Natural killer cell (primary cell): ENCODE measurements at regions of chr2 and their contacts with region 1.

Region 1: DNA sequence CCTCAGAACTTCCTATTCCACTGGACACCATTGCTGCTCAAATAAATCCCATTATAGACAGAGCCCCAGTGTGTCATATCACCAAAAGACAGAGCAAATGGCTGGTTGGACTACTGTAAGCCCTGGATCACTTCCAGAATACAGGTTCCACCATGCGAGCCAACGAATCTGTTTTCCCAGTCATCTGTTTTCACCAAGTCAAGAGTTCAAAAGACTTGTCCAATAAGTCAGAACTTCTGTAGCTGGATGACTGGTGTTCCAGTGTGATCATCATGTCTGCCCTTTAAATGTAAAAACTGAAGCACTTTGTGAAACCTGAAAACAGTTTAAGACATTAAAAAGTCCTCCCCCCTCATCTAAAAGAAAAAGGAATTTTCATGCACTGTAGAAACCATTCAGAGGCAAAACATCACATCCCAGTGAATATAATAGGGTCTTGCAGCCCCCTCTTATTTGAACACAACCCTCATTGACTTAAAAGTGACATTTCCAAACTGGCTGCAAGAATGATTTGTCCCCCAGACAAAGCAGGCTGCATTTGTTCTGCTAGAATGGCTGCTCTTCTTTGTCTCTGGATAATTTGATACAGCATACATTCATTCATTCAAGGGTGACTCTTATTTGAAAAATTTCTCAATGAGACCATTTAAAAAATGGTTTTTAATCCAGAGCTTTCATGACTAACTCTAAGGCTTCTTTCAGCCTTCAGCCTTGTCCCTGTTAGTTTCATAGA is 64.6 kb upstream of the TANC1 start:
- DNase-seq: no peak
- ATAC-seq: no peak
- H3K4me3 ChIP-seq: no peak overlapping the region
- H3K4me3 Mint-ChIP-seq: no peak overlapping the region
- H3K27ac ChIP-seq: no peak overlapping the region
- H3K27ac Mint-ChIP-seq: no peak overlapping the region
- H3K4me1 ChIP-seq: no peaks in the 10 kb centered on the region
- H3K4me1 Mint-ChIP-seq: no peaks in the 10 kb centered on the region
- H3K27me3 ChIP-seq: no peaks in the 10 kb centered on the region
- H3K27me3 Mint-ChIP-seq: peaks cover 0 to 16% of the 10 kb centered on the region in 2 donors
- CTCF ChIP-seq: no peak

Region 2: GRCh38 chr2:158191076-158191895 is 712.6 kb before region 1 on chr2:
- intact Hi-C with region 1: no loop called
- DNase-seq: peak in 1 of 2 donors; percentile 61
- ATAC-seq: peak in 1 of 3 donors; percentile 30
- H3K4me3 ChIP-seq: peak overlapping the region; percentile 2
- H3K4me3 Mint-ChIP-seq: peak overlapping the region; percentile 38
- H3K27ac ChIP-seq: no peak overlapping the region
- H3K27ac Mint-ChIP-seq: no peak overlapping the region
- H3K4me1 ChIP-seq: no peaks in the 10 kb centered on the region
- H3K4me1 Mint-ChIP-seq: peaks cover 5 to 6% of the 10 kb centered on the region in 2 donors
- H3K27me3 ChIP-seq: no peaks in the 10 kb centered on the region
- H3K27me3 Mint-ChIP-seq: no peaks in the 10 kb centered on the region
- CTCF ChIP-seq: no peak

Region 3: GRCh38 chr2:158828493-158829164 is 75.2 kb before region 1 on chr2:
- intact Hi-C with region 1: no loop called
- DNase-seq: no peak
- ATAC-seq: no peak
- H3K4me3 ChIP-seq: no peak overlapping the region
- H3K4me3 Mint-ChIP-seq: no peak overlapping the region
- H3K27ac ChIP-seq: no peak overlapping the region
- H3K27ac Mint-ChIP-seq: no peak overlapping the region
- H3K4me1 ChIP-seq: no peaks in the 10 kb centered on the region
- H3K4me1 Mint-ChIP-seq: no peaks in the 10 kb centered on the region
- H3K27me3 ChIP-seq: no peaks in the 10 kb centered on the region
- H3K27me3 Mint-ChIP-seq: peaks cover 3 to 8% of the 10 kb centered on the region in 2 donors
- CTCF ChIP-seq: no peak

Region 4: GRCh38 chr2:158926478-158926948 is 22.6 kb after region 1 on chr2:
- intact Hi-C with region 1: no loop called
- DNase-seq: no peak
- ATAC-seq: peak in 2 of 3 donors; percentile 73 to 96
- H3K4me3 ChIP-seq: no peak overlapping the region
- H3K4me3 Mint-ChIP-seq: peak overlapping the region; percentile 83
- H3K27ac ChIP-seq: no peak overlapping the region
- H3K27ac Mint-ChIP-seq: no peak overlapping the region
- H3K4me1 ChIP-seq: no peaks in the 10 kb centered on the region
- H3K4me1 Mint-ChIP-seq: peaks cover 10 to 11% of the 10 kb centered on the region in 2 donors
- H3K27me3 ChIP-seq: no peaks in the 10 kb centered on the region
- H3K27me3 Mint-ChIP-seq: peaks cover 29 to 59% of the 10 kb centered on the region in 2 donors
- CTCF ChIP-seq: no peak

Region 5: DNA sequence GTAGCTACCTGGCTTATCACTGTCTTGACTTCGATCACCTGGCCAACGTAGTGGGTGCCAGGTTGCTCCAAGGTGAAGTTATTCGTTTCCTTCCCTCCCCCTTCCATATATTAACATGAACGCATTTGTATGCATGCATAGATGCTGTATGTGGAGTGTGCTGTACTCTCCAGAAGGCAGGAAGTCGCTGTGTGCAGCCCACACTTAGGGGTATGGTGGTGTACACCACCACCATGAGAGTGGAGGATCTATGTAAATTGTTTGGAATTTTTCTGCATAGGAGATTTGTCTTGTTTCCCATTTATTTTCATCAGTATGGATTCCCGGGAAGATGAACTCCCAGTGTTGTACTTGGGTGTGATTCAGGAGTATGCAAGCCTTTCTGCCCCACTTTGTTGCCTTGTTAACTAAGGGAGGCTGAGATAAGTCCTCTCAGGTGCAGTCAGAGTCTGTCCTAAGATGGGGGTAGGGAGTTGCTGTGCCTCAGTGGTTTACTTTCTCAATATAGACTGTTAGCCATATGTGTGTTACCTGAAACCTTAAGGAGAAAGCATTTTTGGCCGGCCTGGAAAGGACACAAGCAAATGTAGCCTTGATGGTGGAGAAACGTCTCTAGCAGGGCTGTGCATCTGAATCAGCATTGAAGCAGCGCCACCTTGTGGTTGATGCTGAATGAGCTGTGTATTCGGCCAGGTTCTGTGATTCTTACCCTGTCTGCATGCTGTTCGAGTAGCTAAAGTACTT is 214.4 kb after region 1 on chr2:
- intact Hi-C with region 1: loop called (anchors 1 kb)
- DNase-seq: peak; percentile 77 to 89
- ATAC-seq: peak; percentile 81 to 97 (median 92)
- H3K4me3 ChIP-seq: no peak overlapping the region
- H3K4me3 Mint-ChIP-seq: no peak overlapping the region
- H3K27ac ChIP-seq: no peak overlapping the region
- H3K27ac Mint-ChIP-seq: no peak overlapping the region
- H3K4me1 ChIP-seq: peaks cover 8% of the 10 kb centered on the region
- H3K4me1 Mint-ChIP-seq: peaks cover 12 to 19% of the 10 kb centered on the region in 2 donors
- H3K27me3 ChIP-seq: no peaks in the 10 kb centered on the region
- H3K27me3 Mint-ChIP-seq: peaks cover 3 to 5% of the 10 kb centered on the region in 2 donors
- CTCF ChIP-seq: peak; percentile 94

Region 6: DNA sequence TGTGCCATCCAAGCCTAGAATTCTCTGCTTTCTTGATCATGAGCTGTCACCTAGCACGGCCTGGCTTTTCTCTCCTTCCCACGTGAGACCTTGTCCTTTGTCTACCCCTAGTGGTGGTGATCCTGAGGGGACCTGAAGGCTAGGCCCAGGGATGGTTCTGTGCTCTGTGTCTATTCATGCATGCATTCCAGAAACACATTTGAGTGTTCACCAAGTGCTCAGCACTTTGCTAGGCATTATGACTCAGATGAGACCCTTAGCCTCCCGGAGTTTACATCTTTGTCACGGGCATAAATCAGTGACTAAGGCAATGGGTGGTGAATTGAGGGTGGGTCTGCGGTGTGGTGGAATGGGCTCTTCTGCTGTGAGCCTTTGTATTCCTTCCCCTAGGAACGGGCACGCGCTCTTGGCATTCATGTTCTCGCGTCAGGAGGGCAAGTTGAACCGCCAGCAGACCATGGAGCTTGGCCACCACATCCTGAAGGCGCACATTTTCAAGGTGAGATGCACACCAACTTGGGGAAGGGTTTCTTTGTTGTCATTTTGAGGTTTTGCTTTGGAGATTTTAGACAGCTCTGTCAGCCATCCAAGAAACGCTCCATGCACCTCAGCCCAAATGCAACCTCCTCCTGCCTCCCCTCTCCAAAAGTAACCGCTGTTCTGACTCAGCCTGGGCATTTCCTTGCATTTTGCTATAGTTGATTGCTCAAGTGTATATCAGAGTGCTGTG is 281.7 kb after region 1 on chr2:
- intact Hi-C with region 1: loop called (anchors 2 kb)
- DNase-seq: peak in 1 of 2 donors; percentile 59
- ATAC-seq: peak; percentile 65 to 93 (median 87)
- H3K4me3 ChIP-seq: no peak overlapping the region
- H3K4me3 Mint-ChIP-seq: no peak overlapping the region
- H3K27ac ChIP-seq: no peak overlapping the region
- H3K27ac Mint-ChIP-seq: peak overlapping the region in 1 of 2 donors; percentile 49
- H3K4me1 ChIP-seq: peaks cover 10% of the 10 kb centered on the region
- H3K4me1 Mint-ChIP-seq: peaks cover 18 to 32% of the 10 kb centered on the region in 2 donors
- H3K27me3 ChIP-seq: no peaks in the 10 kb centered on the region
- H3K27me3 Mint-ChIP-seq: peaks cover 0 to 3% of the 10 kb centered on the region in 2 donors
- CTCF ChIP-seq: peak; percentile 52

Region 7: DNA sequence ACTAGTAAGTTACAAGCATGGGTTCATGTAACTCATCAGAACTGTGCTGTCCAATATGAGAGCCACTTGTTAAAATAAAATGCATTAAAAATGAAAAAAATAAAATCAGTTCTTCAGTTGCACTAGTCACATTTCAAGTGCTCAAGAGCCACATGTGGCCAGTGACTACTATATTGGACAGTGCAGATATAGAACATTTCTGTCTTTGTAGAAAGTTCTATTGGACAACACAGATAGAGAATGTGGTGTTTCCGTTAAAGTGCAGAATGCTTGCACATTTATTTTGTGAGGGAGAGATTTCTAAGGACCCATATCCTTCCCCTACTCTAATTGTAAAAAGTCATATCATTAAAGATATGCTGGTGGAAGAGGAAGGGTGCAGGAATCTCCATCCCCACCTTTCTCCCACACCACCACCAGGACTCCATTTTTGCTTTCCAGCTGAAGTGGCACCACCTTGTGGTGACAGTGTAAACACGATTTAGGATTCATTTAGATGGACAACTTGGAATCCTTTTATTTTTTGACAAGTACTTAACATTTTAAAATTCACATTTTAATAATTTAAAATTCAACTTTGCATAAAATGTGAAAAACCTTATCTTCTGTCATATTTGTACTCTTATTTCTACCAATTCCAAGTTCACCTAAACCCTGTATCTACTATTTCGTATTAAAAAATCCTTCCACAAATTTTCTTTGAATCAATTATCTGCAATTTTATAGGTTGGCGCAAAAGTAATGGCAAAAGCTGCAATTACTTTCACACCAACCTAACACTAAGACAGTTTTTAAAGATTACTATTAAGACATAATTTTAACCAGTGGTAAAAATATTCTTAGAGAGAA is 903.5 kb after region 1 on chr2:
- intact Hi-C with region 1: loop called (anchors 2 kb)
- DNase-seq: peak in 1 of 2 donors; percentile 50
- ATAC-seq: peak in 1 of 3 donors; percentile 48
- H3K4me3 ChIP-seq: no peak overlapping the region
- H3K4me3 Mint-ChIP-seq: no peak overlapping the region
- H3K27ac ChIP-seq: no peak overlapping the region
- H3K27ac Mint-ChIP-seq: no peak overlapping the region
- H3K4me1 ChIP-seq: no peaks in the 10 kb centered on the region
- H3K4me1 Mint-ChIP-seq: no peaks in the 10 kb centered on the region
- H3K27me3 ChIP-seq: no peaks in the 10 kb centered on the region
- H3K27me3 Mint-ChIP-seq: no peaks in the 10 kb centered on the region
- CTCF ChIP-seq: peak; percentile 65

Region 8: DNA sequence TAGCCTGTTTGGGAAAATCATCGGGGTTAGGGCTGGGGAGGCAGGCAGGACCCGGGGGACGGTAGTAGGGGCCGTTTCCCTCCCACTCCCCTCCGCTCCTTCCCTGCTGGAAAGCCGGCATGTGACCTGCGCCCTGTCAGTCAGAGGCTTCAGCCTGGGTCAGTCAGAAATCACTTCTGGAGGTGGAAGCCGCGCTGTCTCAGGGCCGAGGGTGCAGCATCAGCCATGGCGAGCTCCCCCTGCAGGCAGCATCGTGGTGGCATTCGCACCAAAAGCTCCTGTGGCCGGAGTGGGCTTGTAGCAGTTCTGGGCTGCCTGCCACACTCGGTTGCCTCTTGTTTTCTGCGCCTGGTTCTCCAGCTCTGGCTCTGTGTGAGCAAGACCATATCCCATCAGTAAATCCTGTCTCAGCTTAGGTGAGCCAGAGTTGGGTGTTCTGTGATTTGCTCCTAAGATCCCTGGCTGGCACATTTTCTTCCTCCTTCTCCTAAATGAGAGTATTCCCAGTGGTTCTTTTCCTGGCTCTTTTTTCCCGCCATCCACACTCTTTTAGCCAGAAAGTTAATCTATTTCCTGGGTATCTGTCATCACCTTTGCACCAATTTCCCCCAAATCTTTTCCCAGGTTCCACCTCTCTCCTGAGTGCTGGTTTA is 1018.0 kb after region 1 on chr2:
- intact Hi-C with region 1: loop called (anchors 1 kb)
- DNase-seq: peak; percentile 56 to 80
- ATAC-seq: peak; percentile 88 to 98 (median 97)
- H3K4me3 ChIP-seq: no peak overlapping the region
- H3K4me3 Mint-ChIP-seq: no peak overlapping the region
- H3K27ac ChIP-seq: no peak overlapping the region
- H3K27ac Mint-ChIP-seq: no peak overlapping the region
- H3K4me1 ChIP-seq: no peaks in the 10 kb centered on the region
- H3K4me1 Mint-ChIP-seq: peaks cover 5 to 6% of the 10 kb centered on the region in 2 donors
- H3K27me3 ChIP-seq: no peaks in the 10 kb centered on the region
- H3K27me3 Mint-ChIP-seq: peaks cover 26 to 44% of the 10 kb centered on the region in 2 donors
- CTCF ChIP-seq: peak; percentile 80

Region 9: GRCh38 chr2:160210599-160211138 is 1306.8 kb after region 1 on chr2:
- intact Hi-C with region 1: loop called (anchors 5 kb)
- DNase-seq: peak; percentile 58 to 81
- ATAC-seq: peak; percentile 69 to 72 (median 72)
- H3K4me3 ChIP-seq: no peak overlapping the region
- H3K4me3 Mint-ChIP-seq: no peak overlapping the region
- H3K27ac ChIP-seq: no peak overlapping the region
- H3K27ac Mint-ChIP-seq: no peak overlapping the region
- H3K4me1 ChIP-seq: peaks cover 26% of the 10 kb centered on the region
- H3K4me1 Mint-ChIP-seq: peaks cover 47 to 50% of the 10 kb centered on the region in 2 donors
- H3K27me3 ChIP-seq: peaks cover 2% of the 10 kb centered on the region
- H3K27me3 Mint-ChIP-seq: peaks cover 19 to 28% of the 10 kb centered on the region in 2 donors
- CTCF ChIP-seq: peak; percentile 84